ENCODE measurements at regions of chr3 and their contacts with region 1.

Region 1: GRCh38 chr3:194573691-194574437 is 59.4 kb downstream of the TMEM44 start:
- DNase-seq: peak; percentile 40
- ATAC-seq: peak; percentile 94
- H3K4me3 Mint-ChIP-seq: no peak overlapping the region
- H3K27ac Mint-ChIP-seq: no peak overlapping the region
- H3K4me1 Mint-ChIP-seq: 0 out of 2 replicates have a peak, but pooled peaks cover 2% of the 10 kb centered on the region
- H3K27me3 Mint-ChIP-seq: no peaks in the 10 kb centered on the region
- CTCF ChIP-seq: 0 out of 2 replicates have a peak, but pooled peaks have one; percentile 17

Region 2: DNA sequence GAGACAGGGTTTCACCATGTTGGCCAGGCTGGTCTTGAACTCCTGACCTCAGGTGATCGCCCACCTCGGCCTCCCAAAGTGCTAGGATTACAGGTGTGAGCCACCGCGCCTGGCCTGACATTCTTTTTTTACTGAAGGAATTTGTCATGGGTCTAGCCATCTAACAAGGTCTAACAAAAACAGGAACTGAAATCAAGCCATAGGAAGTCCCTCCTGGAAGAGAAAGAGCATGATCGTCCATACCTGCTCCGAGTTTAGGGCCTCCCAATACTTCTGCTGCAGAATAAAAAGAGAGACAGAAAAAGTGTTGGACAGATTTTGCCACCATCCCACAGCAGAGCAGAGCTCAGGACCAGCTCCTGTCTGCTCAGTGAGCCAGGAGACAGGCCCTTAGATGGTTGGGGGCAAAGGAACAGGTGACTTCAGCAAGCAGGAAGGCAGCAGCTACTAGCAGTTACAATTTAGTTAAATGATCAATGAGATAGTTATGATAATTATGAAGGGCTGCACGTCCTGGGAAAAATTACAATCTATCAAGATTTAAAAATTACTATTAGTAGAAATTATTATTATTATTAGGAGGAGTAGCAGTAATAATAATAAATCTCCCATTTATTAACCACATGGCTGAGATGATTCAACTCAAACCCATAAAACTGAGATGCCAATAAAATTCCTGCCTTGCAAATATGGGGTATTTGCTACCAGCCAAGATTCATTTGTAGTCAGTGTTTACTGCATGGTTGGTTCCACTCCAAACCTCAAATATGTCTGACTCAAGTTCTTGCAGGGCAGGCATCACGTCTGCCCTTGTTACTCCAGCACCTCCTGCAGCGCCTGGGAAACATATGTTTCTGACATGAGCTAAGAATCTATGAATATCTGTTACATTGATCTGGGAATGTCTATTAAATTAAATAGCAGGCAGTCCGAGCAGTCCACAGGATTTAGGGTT is 19.2 kb after region 1 on chr3:
- CTCF ChIA-PET with region 1: interaction called, 13 read pairs
- POLR2A ChIA-PET with region 1: interaction called, 3 read pairs
- DNase-seq: no peak
- ATAC-seq: no peak
- H3K4me3 Mint-ChIP-seq: no peak overlapping the region
- H3K27ac Mint-ChIP-seq: no peak overlapping the region
- H3K4me1 Mint-ChIP-seq: no peaks in the 10 kb centered on the region
- H3K27me3 Mint-ChIP-seq: no peaks in the 10 kb centered on the region
- CTCF ChIP-seq: no peak